CD8-positive, alpha-beta T cell (primary cell): ENCODE measurements at regions of chr2 and their contacts with region 1.

Region 1: GRCh38 chr2:81576713-81577112 is 1272.2 kb upstream of the LRRTM1 start:
- DNase-seq: no peak
- ATAC-seq: no peak
- H3K4me3 ChIP-seq: no peak overlapping the region
- H3K4me3 Mint-ChIP-seq: no peak overlapping the region
- H3K27ac ChIP-seq: no peak overlapping the region
- H3K27ac Mint-ChIP-seq: no peak overlapping the region
- H3K4me1 ChIP-seq: no peaks in the 10 kb centered on the region
- H3K4me1 Mint-ChIP-seq: no peaks in the 10 kb centered on the region
- H3K27me3 ChIP-seq: no peaks in the 10 kb centered on the region
- H3K27me3 Mint-ChIP-seq: no peaks in the 10 kb centered on the region
- CTCF ChIP-seq: no peak

Region 2: DNA sequence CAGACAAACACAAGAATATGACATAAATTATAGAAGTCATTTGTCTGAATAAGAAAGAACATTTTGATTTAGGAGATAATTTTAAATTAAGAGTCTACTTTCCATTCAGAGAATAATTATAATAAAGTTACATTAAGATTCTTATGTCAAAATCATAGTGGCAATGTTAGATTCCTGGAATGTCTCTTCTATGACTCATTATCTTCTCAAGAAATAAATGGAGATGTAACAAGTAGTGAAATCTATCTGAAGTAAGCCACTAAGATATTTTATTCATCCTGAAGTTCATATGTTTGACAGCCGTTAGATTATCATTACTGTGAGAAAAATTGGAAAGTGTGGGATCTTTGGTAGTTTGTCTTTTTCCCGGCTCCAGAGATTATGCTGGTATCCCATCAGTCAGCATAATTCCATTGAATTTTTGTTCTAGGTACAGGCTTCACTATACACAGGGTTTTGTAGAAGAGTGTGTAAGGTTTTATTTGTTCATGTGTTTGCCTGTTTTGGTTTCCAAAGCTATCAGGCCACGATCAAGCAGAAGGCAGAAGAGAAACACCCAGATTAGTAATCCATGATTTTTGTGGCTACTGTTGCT is 25.6 kb before region 1 on chr2:
- CTCF ChIA-PET with region 1: no interaction called
- POLR2A ChIA-PET with region 1: no interaction called
- intact Hi-C with region 1: loop called in 1 of 2 experiments (anchors 2 kb)
- DNase-seq: no peak
- ATAC-seq: no peak
- H3K4me3 ChIP-seq: no peak overlapping the region
- H3K4me3 Mint-ChIP-seq: no peak overlapping the region
- H3K27ac ChIP-seq: no peak overlapping the region
- H3K27ac Mint-ChIP-seq: no peak overlapping the region
- H3K4me1 ChIP-seq: no peaks in the 10 kb centered on the region
- H3K4me1 Mint-ChIP-seq: no peaks in the 10 kb centered on the region
- H3K27me3 ChIP-seq: no peaks in the 10 kb centered on the region
- H3K27me3 Mint-ChIP-seq: no peaks in the 10 kb centered on the region
- CTCF ChIP-seq: no peak